HepG2 (cell line): ENCODE measurements at regions of chr13 and their contacts with region 1.

Region 1: GRCh38 chr13:27977476-27978300 is 8.6 kb upstream of the CDX2 start:
- DNase-seq: no peak
- ATAC-seq: peak; percentile 24; the same call in 2 of the 3 replicates
- H3K4me3 ChIP-seq: no peak overlapping the region
- H3K27ac ChIP-seq: no peak overlapping the region
- H3K4me1 ChIP-seq: peaks cover 13% of the 10 kb centered on the region
- H3K27me3 ChIP-seq: peaks cover 10 to 68% of the 10 kb centered on the region in 2 experiments
- CTCF ChIP-seq: no peak
- EP300 ChIP-seq: no peak
- POLR2A ChIP-seq: no peak
- RAD21 ChIP-seq: no peak

Region 2: DNA sequence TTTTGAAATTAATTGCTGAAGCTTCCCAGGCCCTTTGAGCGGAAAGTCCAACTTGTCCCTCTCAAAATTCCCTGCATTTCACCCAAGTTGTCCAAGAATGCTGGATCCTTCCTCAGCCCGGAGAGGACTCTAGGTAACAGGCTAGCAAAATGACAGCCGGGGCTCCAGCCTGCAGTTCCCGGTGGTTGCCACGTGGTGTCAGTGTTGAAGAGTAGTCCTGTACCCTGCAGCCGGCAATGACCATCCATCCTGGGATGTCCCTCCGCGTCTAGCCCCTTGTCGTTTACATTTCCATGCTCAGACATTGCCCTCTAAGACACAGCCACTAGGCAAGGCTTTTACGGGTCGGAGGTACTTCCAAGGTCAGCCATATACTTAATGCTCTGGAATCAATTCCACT is 495.9 kb before region 1 on chr13:
- CTCF ChIA-PET with region 1: no interaction called
- POLR2A ChIA-PET with region 1: no interaction called
- in situ Hi-C with region 1: loop called (anchors 25 kb)
- intact Hi-C with region 1: loop called (anchors 5 kb)
- DNase-seq: peak; percentile 37
- ATAC-seq: peak; percentile 58
- H3K4me3 ChIP-seq: no peak overlapping the region
- H3K27ac ChIP-seq: no peak overlapping the region
- H3K4me1 ChIP-seq: peaks cover 14% of the 10 kb centered on the region
- H3K27me3 ChIP-seq: no peaks in the 10 kb centered on the region
- CTCF ChIP-seq: peak; percentile 79
- EP300 ChIP-seq: no peak
- POLR2A ChIP-seq: no peak
- RAD21 ChIP-seq: no peak; the same call in 1 of the 2 replicates

Region 3: GRCh38 chr13:27770809-27771208 is 206.9 kb before region 1 on chr13:
- CTCF ChIA-PET with region 1: no interaction called
- POLR2A ChIA-PET with region 1: no interaction called
- in situ Hi-C with region 1: no loop called
- intact Hi-C with region 1: loop called (anchors 5 kb)
- DNase-seq: peak; percentile 42
- ATAC-seq: peak; percentile 88
- H3K4me3 ChIP-seq: no peak overlapping the region
- H3K27ac ChIP-seq: no peak overlapping the region
- H3K4me1 ChIP-seq: peaks cover 13% of the 10 kb centered on the region
- H3K27me3 ChIP-seq: no peaks in the 10 kb centered on the region; a peak in 2 of 5 replicates
- CTCF ChIP-seq: peak; percentile 75
- EP300 ChIP-seq: no peak
- POLR2A ChIP-seq: no peak
- RAD21 ChIP-seq: no peak